Right ventricle myocardium inferior (tissue), 1 donor: ENCODE measurements at regions of chr7 and their contacts with region 1.

Region 1: DNA sequence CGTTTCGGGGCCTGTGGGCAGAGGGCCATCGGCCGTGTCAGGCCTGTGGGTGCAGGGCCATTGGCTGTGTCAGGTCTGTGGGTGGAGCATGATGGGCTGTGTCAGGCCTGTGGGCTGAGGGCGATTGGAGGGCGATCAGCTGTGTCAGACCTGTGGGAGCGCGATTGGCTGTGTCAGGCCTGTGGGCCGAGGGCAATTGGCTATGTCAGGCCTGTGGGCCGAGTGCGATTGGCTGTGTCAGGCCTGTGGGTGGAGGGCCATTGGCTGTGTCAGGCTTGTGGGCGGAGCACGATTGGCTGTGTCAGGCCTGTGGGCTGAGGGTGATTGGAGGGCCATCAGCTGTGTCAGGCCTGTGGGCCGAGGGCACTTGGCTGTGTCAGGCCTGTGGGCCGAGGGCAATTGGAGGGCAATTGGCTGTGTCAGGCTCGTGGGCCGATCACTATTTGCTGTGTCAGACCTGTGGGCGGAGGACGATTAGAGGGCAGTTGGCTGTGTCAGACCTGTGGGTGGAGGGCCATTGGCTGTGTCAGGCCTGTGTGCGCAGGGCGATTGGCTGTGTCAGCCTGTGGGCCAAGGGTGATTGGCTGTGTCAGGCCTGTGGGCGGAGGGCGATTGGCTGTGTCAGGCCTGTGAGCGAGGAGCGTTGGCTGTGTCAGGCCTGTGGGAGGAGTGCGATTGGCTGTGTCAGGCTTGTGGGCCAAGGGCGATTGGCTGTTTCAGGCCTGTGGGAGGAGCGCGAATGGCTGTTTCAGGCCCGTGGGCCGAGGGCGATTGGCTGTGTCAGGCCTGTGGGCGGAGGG is 54.1 kb downstream of the DYNC2I1 start:
- DNase-seq: no peak
- ATAC-seq: peak; percentile 37

Region 2: GRCh38 chr7:158754746-158755444 is 155.6 kb before region 1 on chr7:
- intact Hi-C with region 1: loop called (anchors 5 kb)
- DNase-seq: no peak
- ATAC-seq: no peak

Region 3: DNA sequence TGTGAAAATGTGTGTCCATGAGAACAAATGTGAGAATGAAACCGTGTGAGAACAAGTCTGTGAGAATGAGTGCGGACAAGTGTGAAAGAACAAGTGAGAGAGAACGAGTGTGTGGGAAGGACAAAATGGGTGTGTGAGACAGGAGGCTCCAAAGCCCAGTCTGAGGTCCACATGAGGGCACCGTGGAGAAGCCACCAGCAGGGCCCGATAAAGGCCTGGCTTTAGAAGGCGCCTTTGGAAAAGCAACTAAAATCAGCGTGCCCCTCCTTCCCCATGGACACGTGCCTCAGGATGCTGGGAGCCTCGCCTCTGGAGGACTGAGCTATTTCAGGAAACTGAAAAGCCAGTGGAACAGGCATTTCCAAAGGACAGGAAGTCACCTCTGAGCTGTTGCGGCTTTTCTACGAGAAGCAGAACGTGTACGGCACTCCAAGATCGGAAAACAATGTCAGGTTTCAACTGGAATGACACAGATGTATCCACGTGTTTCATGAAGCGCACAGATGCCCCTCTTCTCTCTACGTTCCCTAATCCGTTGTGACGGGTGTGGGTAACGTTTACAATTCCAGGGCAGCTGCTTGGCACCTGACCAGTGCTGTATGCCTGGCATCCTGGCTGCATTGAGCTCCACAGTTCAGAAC is 127.6 kb before region 1 on chr7:
- intact Hi-C with region 1: loop called (anchors 5 kb)
- DNase-seq: peak; percentile 74
- ATAC-seq: peak; percentile 91

Region 4: GRCh38 chr7:158885624-158886023 is 24.8 kb before region 1 on chr7:
- intact Hi-C with region 1: no loop called
- DNase-seq: no peak
- ATAC-seq: no peak